Activated naive CD4-positive, alpha-beta T cell treated with anti-CD3 and anti-CD28 coated beads for 36 hours (primary cell): ENCODE measurements at regions of chr1 and their contacts with region 1.

Region 1: GRCh38 chr1:169694304-169695075 is 16.9 kb downstream of the SELL start:
- DNase-seq: peak; percentile 59
- H3K4me3 Mint-ChIP-seq: peak overlapping the region; percentile 32
- H3K27ac Mint-ChIP-seq: peak overlapping the region; percentile 94
- H3K4me1 Mint-ChIP-seq: peaks cover 96% of the 10 kb centered on the region
- H3K27me3 Mint-ChIP-seq: no peaks in the 10 kb centered on the region

Region 2: DNA sequence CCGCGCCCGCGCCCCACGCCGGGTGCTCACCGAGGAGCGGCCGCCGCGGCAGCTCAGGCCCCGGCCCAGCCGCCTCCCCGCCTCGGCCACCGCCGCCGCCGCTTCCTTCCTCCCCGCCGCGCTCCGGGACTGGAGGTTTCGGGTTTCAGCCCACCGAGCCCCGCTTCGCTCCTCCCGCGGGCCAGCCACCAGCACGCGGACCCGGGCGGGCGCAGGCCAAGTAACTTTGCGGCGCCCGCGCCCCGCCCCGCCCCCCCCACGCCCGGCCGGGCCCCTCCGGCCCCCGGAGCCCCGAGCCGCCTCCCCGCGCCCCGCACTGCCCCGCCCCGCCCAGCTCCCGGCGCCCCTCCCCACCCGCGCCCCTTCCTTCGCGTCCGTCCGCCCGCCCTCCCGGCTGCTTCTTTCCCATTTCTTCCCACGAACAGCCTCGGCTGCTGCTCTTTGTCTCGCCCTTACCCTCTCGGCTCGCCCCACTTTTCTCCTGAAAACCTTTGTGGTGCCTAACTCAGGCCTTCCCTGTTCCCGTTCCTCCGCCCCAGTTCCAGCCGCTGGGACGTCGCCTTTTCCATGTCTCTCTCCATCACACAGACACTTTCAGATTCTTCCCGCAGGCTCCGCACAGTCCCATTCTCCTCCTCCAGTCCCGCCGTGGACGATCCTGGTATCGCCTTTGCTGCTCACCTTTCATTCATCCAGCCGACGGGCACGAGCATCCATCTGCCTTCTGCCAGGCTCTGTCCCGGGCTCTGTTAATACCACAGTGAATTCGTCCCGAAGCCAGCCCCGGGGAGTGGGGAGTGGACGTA is 1557.6 kb before region 1 on chr1 and contains the start of gene GPR161:
- CTCF ChIA-PET with region 1: no interaction called
- intact Hi-C with region 1: loop called (anchors 2 kb)
- DNase-seq: peak; percentile 37
- H3K4me3 Mint-ChIP-seq: peak within 1 kb of the TSS; percentile 75
- H3K27ac Mint-ChIP-seq: no peak within 1 kb of the TSS
- H3K4me1 Mint-ChIP-seq: peaks cover 39% of the 10 kb centered on the region
- H3K27me3 Mint-ChIP-seq: peaks cover 26% of the 10 kb centered on the region
- total RNA-seq, gene GPR161: 0.12 to 0.29 TPM

Region 3: GRCh38 chr1:169460191-169460833 is 234.2 kb before region 1 on chr1:
- CTCF ChIA-PET with region 1: no interaction called
- intact Hi-C with region 1: loop called (anchors 5 kb)
- DNase-seq: peak; percentile 24
- H3K4me3 Mint-ChIP-seq: peak overlapping the region; percentile 49
- H3K27ac Mint-ChIP-seq: no peak overlapping the region
- H3K4me1 Mint-ChIP-seq: peaks cover 25% of the 10 kb centered on the region
- H3K27me3 Mint-ChIP-seq: peaks cover 11% of the 10 kb centered on the region

Region 4: GRCh38 chr1:169565335-169566271 is 128.9 kb before region 1 on chr1:
- CTCF ChIA-PET with region 1: no interaction called
- intact Hi-C with region 1: no loop called
- DNase-seq: no peak
- H3K4me3 Mint-ChIP-seq: no peak overlapping the region
- H3K27ac Mint-ChIP-seq: no peak overlapping the region
- H3K4me1 Mint-ChIP-seq: peaks cover 26% of the 10 kb centered on the region
- H3K27me3 Mint-ChIP-seq: no peaks in the 10 kb centered on the region

Region 5: GRCh38 chr1:169648709-169649108 is 45.8 kb before region 1 on chr1:
- CTCF ChIA-PET with region 1: interaction called, 8 read pairs
- intact Hi-C with region 1: loop called (anchors 1 kb)
- DNase-seq: no peak
- H3K4me3 Mint-ChIP-seq: peak overlapping the region; percentile 58
- H3K27ac Mint-ChIP-seq: peak overlapping the region; percentile 95
- H3K4me1 Mint-ChIP-seq: peaks cover 40% of the 10 kb centered on the region
- H3K27me3 Mint-ChIP-seq: no peaks in the 10 kb centered on the region

Region 6: GRCh38 chr1:169680377-169681019 is 14.0 kb before region 1 on chr1:
- CTCF ChIA-PET with region 1: interaction called, 19 read pairs
- intact Hi-C with region 1: loop called (anchors 1 kb)
- DNase-seq: peak; percentile 83
- H3K4me3 Mint-ChIP-seq: peak overlapping the region; percentile 53
- H3K27ac Mint-ChIP-seq: peak overlapping the region; percentile 90
- H3K4me1 Mint-ChIP-seq: peaks cover 61% of the 10 kb centered on the region
- H3K27me3 Mint-ChIP-seq: no peaks in the 10 kb centered on the region